Psoas muscle (tissue), 8 donors: ENCODE measurements at regions of chr15 and their contacts with region 1.

Region 1: GRCh38 chr15:43903864-43904290 is 77.1 kb downstream of the WDR76 start:
- DNase-seq: no peak
- ATAC-seq: peak in 1 of 4 donors; percentile 64
- H3K4me3 ChIP-seq: no peak overlapping the region
- H3K27ac ChIP-seq: no peak overlapping the region
- H3K4me1 ChIP-seq: no peaks in the 10 kb centered on the region
- H3K27me3 ChIP-seq: no peaks in the 10 kb centered on the region
- CTCF ChIP-seq: peak; percentile 59

Region 2: GRCh38 chr15:43845421-43845820 is 58.5 kb before region 1 on chr15:
- intact Hi-C with region 1: no loop called
- DNase-seq: no peak
- ATAC-seq: no peak
- H3K4me3 ChIP-seq: no peak overlapping the region
- H3K27ac ChIP-seq: no peak overlapping the region
- H3K4me1 ChIP-seq: no peaks in the 10 kb centered on the region
- H3K27me3 ChIP-seq: no peaks in the 10 kb centered on the region
- CTCF ChIP-seq: no peak

Region 3: DNA sequence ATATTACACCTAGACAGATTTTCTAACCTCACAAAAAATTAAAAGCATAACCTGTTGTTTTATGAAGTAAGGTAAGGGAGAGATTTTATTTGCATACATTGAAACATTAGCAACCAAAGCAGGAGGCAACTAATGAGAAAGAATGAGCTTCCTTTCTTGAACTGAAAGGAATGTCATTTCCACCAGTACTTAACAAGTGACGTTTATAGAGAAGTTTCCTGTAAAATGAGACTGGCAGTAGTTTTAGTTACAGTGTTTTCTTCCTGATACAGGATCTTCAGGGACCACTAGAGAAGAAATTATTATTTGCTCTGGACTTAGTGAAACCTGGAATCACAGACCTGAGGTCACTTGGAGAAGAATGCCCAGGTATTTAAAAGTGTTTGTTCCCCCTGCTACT is 318.6 kb after region 1 on chr15:
- intact Hi-C with region 1: loop called in 1 of 2 experiments (anchors 10 kb)
- DNase-seq: no peak
- ATAC-seq: no peak
- H3K4me3 ChIP-seq: no peak overlapping the region
- H3K27ac ChIP-seq: no peak overlapping the region
- H3K4me1 ChIP-seq: no peaks in the 10 kb centered on the region
- H3K27me3 ChIP-seq: peaks cover 0 to 26% (median 0%) of the 10 kb centered on the region in 3 donors
- CTCF ChIP-seq: no peak